ENCODE measurements at regions of chr19 and their contacts with region 1.

Region 1: DNA sequence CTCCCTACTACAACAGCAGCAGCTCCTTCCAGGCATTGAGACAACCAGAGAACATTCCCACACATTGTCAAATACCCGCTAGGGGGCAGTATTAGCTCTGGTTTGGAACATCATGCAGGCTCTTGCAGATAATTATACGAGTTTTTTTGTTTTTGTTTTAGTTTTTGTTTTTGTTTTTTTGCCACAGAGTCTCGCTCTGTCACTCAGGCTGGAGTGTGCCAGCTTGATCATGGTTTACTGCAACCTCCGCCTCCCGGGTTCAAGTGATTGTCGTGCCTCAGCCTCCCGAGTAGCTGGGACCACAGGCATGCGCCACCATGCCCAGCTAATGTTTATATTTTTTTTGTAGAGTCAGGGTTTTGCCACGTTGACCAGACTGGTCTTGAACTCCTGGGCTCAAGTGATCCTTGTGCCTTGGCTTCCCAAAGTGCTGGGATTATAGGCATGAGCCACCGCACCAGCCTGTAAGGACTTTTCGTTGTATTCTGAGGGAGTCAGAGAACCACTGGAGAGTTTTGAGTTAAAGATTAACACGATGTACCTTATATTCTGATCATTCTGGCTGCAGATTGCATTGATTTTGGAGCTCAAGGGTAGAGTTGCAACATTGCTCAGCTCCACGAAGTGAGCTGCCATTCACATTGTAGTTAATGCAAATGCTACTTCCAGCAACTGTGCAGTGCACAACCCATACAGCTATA is 41.7 kb upstream of the CEACAM20 start:
- DNase-seq: peak; percentile 80
- H3K4me3 ChIP-seq: no peak overlapping the region
- H3K27ac ChIP-seq: no peak overlapping the region
- H3K4me1 ChIP-seq: no peaks in the 10 kb centered on the region
- H3K27me3 ChIP-seq: peaks cover 30% of the 10 kb centered on the region; the same call in 1 of the 2 replicates

Region 2: GRCh38 chr19:44657211-44657921 is 86.2 kb after region 1 on chr19:
- in situ Hi-C with region 1: loop called (anchors 5 kb)
- DNase-seq: peak; percentile 70
- H3K4me3 ChIP-seq: no peak overlapping the region
- H3K27ac ChIP-seq: no peak overlapping the region
- H3K4me1 ChIP-seq: no peaks in the 10 kb centered on the region; the same call in 1 of the 2 replicates
- H3K27me3 ChIP-seq: no peaks in the 10 kb centered on the region

Region 3: GRCh38 chr19:44741841-44742352 is 170.8 kb after region 1 on chr19:
- in situ Hi-C with region 1: no loop called
- DNase-seq: peak; percentile 98
- H3K4me3 ChIP-seq: peak overlapping the region; percentile 39
- H3K27ac ChIP-seq: peak overlapping the region; percentile 93
- H3K4me1 ChIP-seq: peaks cover 62% of the 10 kb centered on the region
- H3K27me3 ChIP-seq: no peaks in the 10 kb centered on the region

Region 4: DNA sequence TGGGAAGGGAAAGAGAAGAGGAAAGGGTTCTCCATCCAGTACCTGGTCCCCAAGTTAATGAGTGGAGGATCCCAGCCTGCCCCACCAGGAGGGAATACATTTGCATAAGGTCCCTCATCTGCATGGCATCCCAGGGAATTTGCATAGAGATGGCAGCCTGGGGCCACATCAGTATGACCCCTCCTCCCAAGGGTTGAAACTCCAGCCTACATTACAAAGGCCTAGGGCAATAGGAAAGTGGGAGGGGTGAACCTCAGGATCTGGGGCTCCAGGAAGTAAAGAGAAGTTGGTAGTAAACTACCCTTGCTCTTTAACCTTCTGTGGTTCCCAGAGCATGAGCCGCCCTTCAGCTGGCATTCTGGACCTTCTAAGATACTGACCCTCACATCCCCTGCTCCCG is 268.1 kb after region 1 on chr19:
- in situ Hi-C with region 1: loop called (anchors 10 kb)
- DNase-seq: no peak
- H3K4me3 ChIP-seq: no peak overlapping the region
- H3K27ac ChIP-seq: no peak overlapping the region
- H3K4me1 ChIP-seq: no peaks in the 10 kb centered on the region
- H3K27me3 ChIP-seq: no peaks in the 10 kb centered on the region; the same call in 1 of the 2 replicates